ENCODE measurements at regions of chr9 and their contacts with region 1.

Region 1: GRCh38 chr9:1018121-1018701 is 31.9 kb upstream of the DMRT2 start:
- DNase-seq: peak; percentile 63
- ATAC-seq: peak; percentile 85
- H3K4me3 ChIP-seq: no peak overlapping the region
- H3K27ac ChIP-seq: no peak overlapping the region
- H3K4me1 ChIP-seq: no peaks in the 10 kb centered on the region
- H3K27me3 ChIP-seq: no peaks in the 10 kb centered on the region
- CTCF ChIP-seq: peak; percentile 80

Region 2: GRCh38 chr9:1031951-1032601 is 13.9 kb after region 1 on chr9:
- CTCF ChIA-PET with region 1: no interaction called
- POLR2A ChIA-PET with region 1: no interaction called
- intact Hi-C with region 1: no loop called
- DNase-seq: no peak
- ATAC-seq: no peak
- H3K4me3 ChIP-seq: no peak overlapping the region
- H3K27ac ChIP-seq: no peak overlapping the region
- H3K4me1 ChIP-seq: no peaks in the 10 kb centered on the region
- H3K27me3 ChIP-seq: no peaks in the 10 kb centered on the region
- CTCF ChIP-seq: no peak

Region 3: GRCh38 chr9:1050116-1050800 is 32.0 kb after region 1 on chr9 and contains the start of gene DMRT2:
- CTCF ChIA-PET with region 1: no interaction called
- POLR2A ChIA-PET with region 1: no interaction called
- intact Hi-C with region 1: no loop called
- DNase-seq: no peak
- ATAC-seq: no peak
- H3K4me3 ChIP-seq: no peak within 1 kb of the TSS
- H3K27ac ChIP-seq: no peak within 1 kb of the TSS
- H3K4me1 ChIP-seq: peaks cover 11% of the 10 kb centered on the region
- H3K27me3 ChIP-seq: no peaks in the 10 kb centered on the region
- CTCF ChIP-seq: no peak
- total RNA-seq, gene DMRT2: not detected in 2 replicates

Region 4: DNA sequence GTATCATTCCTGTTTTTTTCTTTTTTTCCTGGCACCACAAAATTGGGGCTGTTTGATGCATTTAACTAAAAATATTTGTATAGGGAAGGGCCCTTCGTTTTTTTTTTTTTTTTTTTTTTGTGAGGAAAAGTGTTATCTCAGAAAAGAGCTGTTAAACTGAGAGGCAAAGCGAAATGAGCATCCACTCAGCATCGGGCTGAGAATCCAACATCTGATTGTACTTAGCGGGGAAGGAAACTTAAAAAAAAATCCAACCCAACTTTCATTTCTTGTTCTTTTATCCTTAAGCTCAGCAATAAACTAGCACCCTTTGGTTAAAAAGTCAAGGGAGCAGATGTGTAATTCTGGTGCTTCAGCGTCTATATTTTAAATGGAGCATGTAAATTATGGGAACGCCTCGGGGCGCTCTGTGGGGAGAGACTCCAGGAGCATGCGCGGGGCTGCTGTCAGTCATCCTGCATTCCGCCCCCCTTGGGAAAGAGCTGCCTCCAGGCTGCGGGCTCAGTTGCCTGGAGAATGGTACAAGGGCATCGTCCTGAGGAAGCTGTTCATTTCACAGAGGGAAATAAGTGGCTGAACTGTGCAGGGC is 65.2 kb after region 1 on chr9:
- CTCF ChIA-PET with region 1: no interaction called
- POLR2A ChIA-PET with region 1: no interaction called
- intact Hi-C with region 1: no loop called
- DNase-seq: peak; percentile 26
- ATAC-seq: peak; percentile 71
- H3K4me3 ChIP-seq: peak overlapping the region; percentile 60
- H3K27ac ChIP-seq: no peak overlapping the region
- H3K4me1 ChIP-seq: no peaks in the 10 kb centered on the region
- H3K27me3 ChIP-seq: no peaks in the 10 kb centered on the region
- CTCF ChIP-seq: no peak

Region 5: DNA sequence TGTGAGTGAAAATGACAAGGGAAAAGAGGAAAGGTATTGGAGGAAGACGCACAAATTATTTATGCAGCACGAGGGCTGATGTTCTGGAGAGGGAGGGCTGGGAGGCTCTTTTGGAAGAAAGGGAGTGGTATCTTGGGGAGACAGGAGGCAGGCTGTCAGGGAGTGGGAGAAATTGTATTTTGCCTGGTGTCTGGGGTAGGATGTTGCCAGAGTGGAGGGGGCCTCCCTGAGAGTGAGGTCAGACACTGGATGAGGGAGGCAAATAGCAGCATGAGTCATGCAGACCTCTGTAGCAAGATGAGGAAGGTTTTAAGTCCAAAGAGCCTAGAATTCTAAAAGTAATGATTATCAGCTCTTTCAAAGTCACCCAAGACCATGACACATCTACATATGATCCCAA is 189.9 kb after region 1 on chr9:
- CTCF ChIA-PET with region 1: no interaction called
- POLR2A ChIA-PET with region 1: no interaction called
- intact Hi-C with region 1: no loop called
- DNase-seq: peak; percentile 38
- ATAC-seq: peak; percentile 75
- H3K4me3 ChIP-seq: no peak overlapping the region
- H3K27ac ChIP-seq: peak overlapping the region; percentile 89
- H3K4me1 ChIP-seq: peaks cover 15% of the 10 kb centered on the region
- H3K27me3 ChIP-seq: no peaks in the 10 kb centered on the region
- CTCF ChIP-seq: no peak

Region 6: GRCh38 chr9:1429297-1429696 is 411.1 kb after region 1 on chr9:
- CTCF ChIA-PET with region 1: no interaction called
- POLR2A ChIA-PET with region 1: no interaction called
- intact Hi-C with region 1: loop called (anchors 1 kb)
- DNase-seq: peak; percentile 45
- ATAC-seq: peak; percentile 74
- H3K4me3 ChIP-seq: no peak overlapping the region
- H3K27ac ChIP-seq: no peak overlapping the region
- H3K4me1 ChIP-seq: no peaks in the 10 kb centered on the region
- H3K27me3 ChIP-seq: peaks cover 17% of the 10 kb centered on the region
- CTCF ChIP-seq: peak; percentile 53

Measured in PC-3 (cell line).